ENCODE measurements at regions of chr1 and their contacts with region 1.

Region 1: GRCh38 chr1:228212966-228213844 is 5.4 kb downstream of the OBSCN start:
- DNase-seq: peak; percentile 71 to 88 (median 82)
- ATAC-seq: peak; percentile 95
- H3K4me3 ChIP-seq: peak overlapping the region; percentile 68
- H3K4me3 Mint-ChIP-seq: peak overlapping the region; percentile 77 to 95 (median 91)
- H3K27ac ChIP-seq: peak overlapping the region; percentile 73
- H3K27ac Mint-ChIP-seq: peak overlapping the region; percentile 28 to 96 (median 88)
- H3K4me1 ChIP-seq: no peaks in the 10 kb centered on the region
- H3K4me1 Mint-ChIP-seq: peaks cover 3 to 13% (median 5%) of the 10 kb centered on the region in 7 donors
- H3K27me3 ChIP-seq: no peaks in the 10 kb centered on the region
- H3K27me3 Mint-ChIP-seq: no peaks in the 10 kb centered on the region

Region 2: GRCh38 chr1:228037401-228038386 is 175.5 kb before region 1 on chr1:
- CTCF ChIA-PET with region 1: no interaction called
- POLR2A ChIA-PET with region 1: no interaction called
- intact Hi-C with region 1: no loop called
- DNase-seq: peak in 1 of 9 donors; percentile 34
- ATAC-seq: peak; percentile 54
- H3K4me3 ChIP-seq: no peak overlapping the region
- H3K4me3 Mint-ChIP-seq: peak overlapping the region in 6 of 10 donors; percentile 13 to 65 (median 38)
- H3K27ac ChIP-seq: no peak overlapping the region
- H3K27ac Mint-ChIP-seq: no peak overlapping the region
- H3K4me1 ChIP-seq: peaks cover 0 to 5% of the 10 kb centered on the region in 2 donors
- H3K4me1 Mint-ChIP-seq: peaks cover 0 to 3% (median 0%) of the 10 kb centered on the region in 7 donors
- H3K27me3 ChIP-seq: peaks cover 0 to 9% of the 10 kb centered on the region in 2 donors
- H3K27me3 Mint-ChIP-seq: peaks cover 15 to 47% (median 36%) of the 10 kb centered on the region in 5 donors

Region 3: GRCh38 chr1:228109073-228109961 is 103.9 kb before region 1 on chr1 and contains the start of gene MRPL55:
- CTCF ChIA-PET with region 1: no interaction called
- POLR2A ChIA-PET with region 1: no interaction called
- intact Hi-C with region 1: loop called (anchors 1 kb)
- DNase-seq: peak; percentile 97 to 100 (median 99)
- ATAC-seq: peak; percentile 99
- H3K4me3 ChIP-seq: peak within 1 kb of the TSS; percentile 100
- H3K4me3 Mint-ChIP-seq: peak within 1 kb of the TSS; percentile 87 to 95 (median 93)
- H3K27ac ChIP-seq: peak within 1 kb of the TSS; percentile 94
- H3K27ac Mint-ChIP-seq: peak within 1 kb of the TSS; percentile 88 to 98 (median 95)
- H3K4me1 ChIP-seq: peaks cover 9 to 16% of the 10 kb centered on the region in 2 donors
- H3K4me1 Mint-ChIP-seq: peaks cover 5 to 37% (median 26%) of the 10 kb centered on the region in 7 donors
- H3K27me3 ChIP-seq: no peaks in the 10 kb centered on the region
- H3K27me3 Mint-ChIP-seq: peaks cover 0 to 3% (median 0%) of the 10 kb centered on the region in 5 donors
- total RNA-seq, gene MRPL55: 34.3 to 79.3 (median 65.2) TPM

Region 4: GRCh38 chr1:228139944-228140656 is 73.1 kb before region 1 on chr1 and contains the start of gene GUK1:
- CTCF ChIA-PET with region 1: no interaction called
- POLR2A ChIA-PET with region 1: no interaction called
- intact Hi-C with region 1: loop called (anchors 1 kb)
- DNase-seq: peak; percentile 98 to 100 (median 100)
- ATAC-seq: peak; percentile 93
- H3K4me3 ChIP-seq: peak within 1 kb of the TSS; percentile 88
- H3K4me3 Mint-ChIP-seq: peak within 1 kb of the TSS; percentile 87 to 99 (median 95)
- H3K27ac ChIP-seq: peak within 1 kb of the TSS; percentile 99
- H3K27ac Mint-ChIP-seq: peak within 1 kb of the TSS; percentile 83 to 100 (median 99)
- H3K4me1 ChIP-seq: peaks cover 42 to 49% of the 10 kb centered on the region in 2 donors
- H3K4me1 Mint-ChIP-seq: peaks cover 23 to 48% (median 34%) of the 10 kb centered on the region in 7 donors
- H3K27me3 ChIP-seq: no peaks in the 10 kb centered on the region
- H3K27me3 Mint-ChIP-seq: peaks cover 0 to 24% (median 0%) of the 10 kb centered on the region in 5 donors
- total RNA-seq, gene GUK1: 145 to 309 (median 279) TPM

Region 5: DNA sequence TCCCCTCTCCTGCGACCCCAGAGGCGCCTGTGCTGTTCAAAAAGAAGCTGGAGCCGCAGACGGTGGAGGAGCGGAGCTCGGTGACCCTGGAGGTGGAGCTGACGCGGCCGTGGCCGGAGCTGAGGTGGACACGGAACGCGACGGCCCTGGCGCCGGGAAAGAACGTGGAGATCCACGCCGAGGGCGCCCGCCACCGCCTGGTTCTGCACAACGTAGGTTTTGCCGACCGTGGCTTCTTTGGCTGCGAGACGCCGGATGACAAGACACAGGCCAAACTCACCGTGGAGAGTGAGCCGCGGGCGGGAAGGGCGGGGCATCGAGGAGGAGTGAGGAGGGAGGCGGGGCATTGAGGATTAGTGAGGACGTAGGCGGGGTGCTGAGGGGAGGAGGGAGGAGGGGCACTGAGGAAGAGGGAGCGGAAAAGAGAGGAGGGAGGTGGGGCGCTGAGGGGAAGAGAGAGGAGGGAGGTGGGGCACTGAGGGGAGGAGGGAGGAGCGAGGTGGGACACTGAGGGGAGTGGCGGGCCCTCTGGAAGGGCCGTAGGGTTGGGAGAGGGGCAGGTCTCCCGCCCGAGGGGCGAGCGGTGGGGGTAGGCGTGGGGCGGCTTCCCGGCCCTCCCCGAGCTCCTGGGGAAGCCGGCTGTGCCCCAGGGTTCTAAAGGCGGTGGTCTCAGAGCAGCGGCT is 62.7 kb after region 1 on chr1:
- CTCF ChIA-PET with region 1: interaction called, 3 read pairs
- POLR2A ChIA-PET with region 1: no interaction called
- intact Hi-C with region 1: loop called (anchors 1 kb)
- DNase-seq: peak; percentile 53 to 88 (median 82)
- ATAC-seq: peak; percentile 96
- H3K4me3 ChIP-seq: peak overlapping the region; percentile 77
- H3K4me3 Mint-ChIP-seq: peak overlapping the region; percentile 71 to 88 (median 82)
- H3K27ac ChIP-seq: peak overlapping the region; percentile 77
- H3K27ac Mint-ChIP-seq: peak overlapping the region in 7 of 9 donors; percentile 21 to 73 (median 60)
- H3K4me1 ChIP-seq: no peaks in the 10 kb centered on the region
- H3K4me1 Mint-ChIP-seq: peaks cover 8 to 20% (median 19%) of the 10 kb centered on the region in 7 donors
- H3K27me3 ChIP-seq: no peaks in the 10 kb centered on the region
- H3K27me3 Mint-ChIP-seq: no peaks in the 10 kb centered on the region

Region 6: DNA sequence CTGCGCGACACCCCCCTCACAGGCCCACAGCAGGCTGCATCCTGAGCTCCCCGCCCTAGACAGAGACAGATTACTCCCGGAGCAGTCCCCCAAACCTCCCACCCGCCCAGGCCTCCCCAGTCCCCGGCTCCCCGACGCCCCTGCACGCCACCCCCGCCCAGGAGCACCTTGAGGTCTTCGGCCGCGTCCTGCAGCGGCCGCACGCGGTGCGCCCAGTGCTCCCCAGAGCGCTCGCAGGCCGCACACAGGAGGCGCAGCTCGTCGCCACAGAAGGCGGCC is 192.7 kb after region 1 on chr1:
- CTCF ChIA-PET with region 1: no interaction called
- POLR2A ChIA-PET with region 1: interaction called, 6 read pairs
- intact Hi-C with region 1: loop called in 1 of 2 experiments (anchors 1 kb)
- DNase-seq: no peak
- ATAC-seq: no peak
- H3K4me3 ChIP-seq: peak overlapping the region; percentile 74
- H3K4me3 Mint-ChIP-seq: peak overlapping the region; percentile 80 to 99 (median 94)
- H3K27ac ChIP-seq: peak overlapping the region; percentile 86
- H3K27ac Mint-ChIP-seq: peak overlapping the region; percentile 36 to 92 (median 80)
- H3K4me1 ChIP-seq: peaks cover 36 to 41% of the 10 kb centered on the region in 2 donors
- H3K4me1 Mint-ChIP-seq: peaks cover 46 to 77% (median 56%) of the 10 kb centered on the region in 7 donors
- H3K27me3 ChIP-seq: no peaks in the 10 kb centered on the region
- H3K27me3 Mint-ChIP-seq: no peaks in the 10 kb centered on the region

Region 7: GRCh38 chr1:228500901-228501871 is 288.0 kb after region 1 on chr1:
- CTCF ChIA-PET with region 1: no interaction called
- POLR2A ChIA-PET with region 1: no interaction called
- intact Hi-C with region 1: loop called in 1 of 2 experiments (anchors 1 kb)
- DNase-seq: peak; percentile 72 to 89 (median 85)
- ATAC-seq: peak; percentile 99
- H3K4me3 ChIP-seq: peak overlapping the region; percentile 44
- H3K4me3 Mint-ChIP-seq: peak overlapping the region; percentile 71 to 86 (median 80)
- H3K27ac ChIP-seq: no peak overlapping the region
- H3K27ac Mint-ChIP-seq: peak overlapping the region in 5 of 9 donors; percentile 19 to 72 (median 66)
- H3K4me1 ChIP-seq: peaks cover 9 to 14% of the 10 kb centered on the region in 2 donors
- H3K4me1 Mint-ChIP-seq: peaks cover 9 to 31% (median 18%) of the 10 kb centered on the region in 7 donors
- H3K27me3 ChIP-seq: no peaks in the 10 kb centered on the region
- H3K27me3 Mint-ChIP-seq: peaks cover 0 to 8% (median 0%) of the 10 kb centered on the region in 5 donors